Activated CD4-positive, alpha-beta memory T cell treated with anti-CD3 and anti-CD28 coated beads, Interleukin-2, amount 10 ng/mL, durations not matched to agents 7 days and 5 days (primary cell): ENCODE measurements at regions of chr12 and their contacts with region 1.

Region 1: GRCh38 chr12:10140001-10140400 is 10.0 kb upstream of the CLEC7A start:
- DNase-seq: peak; percentile 54
- H3K4me3 Mint-ChIP-seq: no peak overlapping the region
- H3K27ac Mint-ChIP-seq: no peak overlapping the region
- H3K4me1 Mint-ChIP-seq: no peaks in the 10 kb centered on the region
- H3K27me3 Mint-ChIP-seq: peaks cover 18% of the 10 kb centered on the region

Region 2: DNA sequence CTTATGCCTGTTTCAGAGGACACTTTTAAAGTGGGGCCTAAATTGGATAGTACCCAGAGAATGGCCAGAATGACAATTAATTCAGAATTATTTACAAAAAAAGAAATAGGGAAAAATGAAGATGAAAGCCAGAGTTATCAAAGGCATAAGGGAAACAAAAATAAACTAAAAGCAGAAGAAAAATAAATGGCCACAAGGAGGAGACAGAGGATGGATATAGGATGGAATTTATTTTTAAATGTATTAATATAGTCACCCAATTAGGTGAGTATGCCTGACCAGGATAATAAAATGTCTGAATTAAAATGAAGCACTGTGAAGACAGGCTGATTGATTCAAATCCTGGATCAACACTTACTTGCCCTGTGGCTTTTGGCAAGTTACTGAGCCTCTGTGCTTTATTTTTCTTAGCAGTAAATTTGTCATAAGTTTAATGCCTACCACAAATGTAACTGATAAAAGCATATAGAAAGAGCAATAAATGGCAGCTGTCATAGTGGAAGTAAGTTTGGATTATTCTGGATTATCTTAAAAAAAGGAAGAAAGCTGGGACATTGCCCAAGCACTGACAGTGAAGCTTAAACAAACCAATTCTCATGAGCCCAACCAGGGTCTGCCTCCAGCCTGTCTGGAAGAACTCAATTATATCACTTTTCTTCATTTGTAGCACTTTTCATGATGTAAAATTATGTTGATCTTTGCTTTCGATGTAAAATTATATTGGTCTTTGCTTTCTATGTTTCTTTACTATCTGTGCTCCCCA is 106.0 kb before region 1 on chr12:
- CTCF ChIA-PET with region 1: interaction called, 10 read pairs
- POLR2A ChIA-PET with region 1: no interaction called
- DNase-seq: no peak
- H3K4me3 Mint-ChIP-seq: no peak overlapping the region
- H3K27ac Mint-ChIP-seq: no peak overlapping the region
- H3K4me1 Mint-ChIP-seq: no peaks in the 10 kb centered on the region
- H3K27me3 Mint-ChIP-seq: peaks cover 11% of the 10 kb centered on the region